H1 (cell line): ENCODE measurements at regions of chr3 and their contacts with region 1.

Region 1: DNA sequence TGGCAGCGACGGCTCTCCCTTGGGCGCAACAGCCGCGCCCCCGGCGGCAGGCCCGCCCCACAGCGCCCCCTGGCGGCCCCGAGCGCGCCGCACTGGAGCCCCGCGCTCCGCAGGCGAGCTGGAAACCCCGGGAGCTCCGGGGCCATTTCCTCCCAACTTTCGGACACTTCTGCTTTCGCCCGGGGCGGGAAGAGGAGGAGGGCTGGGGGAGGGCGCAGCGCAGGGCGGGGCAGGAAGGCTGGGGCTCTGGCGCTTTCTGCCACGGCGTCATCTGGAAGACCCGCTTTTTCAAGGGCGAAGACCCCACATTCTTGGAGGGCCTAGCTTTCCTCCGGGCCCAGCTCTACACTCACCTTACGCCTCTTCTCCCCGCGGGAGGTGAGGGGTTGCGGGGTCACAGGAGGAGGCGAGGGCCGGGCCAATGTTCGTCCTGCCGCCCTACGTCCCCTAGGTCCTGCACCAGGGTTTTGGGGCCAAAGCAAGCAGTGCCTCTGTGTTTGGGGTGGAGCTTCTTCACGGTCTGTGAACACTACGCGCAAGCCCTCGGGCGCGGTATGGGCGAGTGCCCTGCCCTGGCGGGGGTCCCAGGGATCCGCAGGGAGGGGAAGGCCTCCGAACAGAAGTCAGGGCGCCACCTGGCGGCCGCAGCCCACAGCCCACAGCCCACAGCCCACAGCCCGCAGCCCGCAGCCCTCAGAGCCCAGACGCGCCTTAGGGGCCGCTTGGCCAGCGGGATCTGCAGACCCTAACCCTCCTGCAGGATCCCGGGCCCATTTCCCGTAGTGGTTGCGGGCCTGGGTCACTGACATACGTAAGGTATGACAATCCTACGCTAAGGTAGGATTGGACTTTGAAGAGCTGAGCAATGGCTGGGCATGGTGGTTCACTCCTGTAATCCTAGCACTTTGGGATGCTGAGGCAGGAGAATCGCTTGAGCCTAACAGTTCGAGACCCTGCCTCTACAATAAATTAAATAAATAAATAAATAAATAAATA is 31.1 kb downstream of the FOXL2 start:
- DNase-seq: peak in 1 of 2 experiments; percentile 98
- H3K4me3 ChIP-seq: peak overlapping the region; percentile 44 to 89 (median 86)
- H3K27ac ChIP-seq: peak overlapping the region; percentile 65
- H3K4me1 ChIP-seq: peaks cover 0 to 4% (median under 1%) of the 10 kb centered on the region in 4 experiments; a peak in 2 of 7 replicates
- H3K27me3 ChIP-seq: no peaks in the 10 kb centered on the region
- CTCF ChIP-seq: peak; percentile 77 to 97 (median 80)
- EP300 ChIP-seq: peak in 1 of 2 experiments; percentile 50; a peak in 1 of 3 replicates
- POLR2A ChIP-seq: peak in 1 of 2 experiments; percentile 57; a peak in 1 of 3 replicates
- RAD21 ChIP-seq: peak; percentile 75 to 85

Region 2: DNA sequence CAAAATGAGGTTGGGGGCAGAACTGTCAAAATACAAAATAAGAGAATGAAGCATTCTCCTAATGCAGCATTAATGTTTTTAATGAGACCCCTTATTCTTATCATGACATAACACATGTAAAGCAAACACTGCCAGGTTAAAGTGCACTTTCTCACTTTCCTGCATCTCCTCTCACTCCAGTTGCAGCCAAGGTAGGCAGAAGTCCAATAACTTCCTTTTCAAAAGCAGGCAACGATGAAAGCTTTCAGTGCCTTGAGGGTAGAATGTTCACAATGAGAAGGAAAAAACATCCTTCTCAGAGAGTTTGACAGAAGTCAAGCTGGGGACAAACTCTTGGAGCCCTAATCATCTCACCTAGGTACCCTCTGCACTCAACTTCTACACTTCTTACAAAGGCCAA is 247.7 kb before region 1 on chr3:
- CTCF ChIA-PET with region 1: interaction called, 24 read pairs
- POLR2A ChIA-PET with region 1: no interaction called
- DNase-seq: no peak
- H3K4me3 ChIP-seq: no peak overlapping the region
- H3K27ac ChIP-seq: no peak overlapping the region
- H3K4me1 ChIP-seq: no peaks in the 10 kb centered on the region
- H3K27me3 ChIP-seq: no peaks in the 10 kb centered on the region
- CTCF ChIP-seq: no peak
- EP300 ChIP-seq: no peak
- POLR2A ChIP-seq: no peak
- RAD21 ChIP-seq: no peak

Region 3: DNA sequence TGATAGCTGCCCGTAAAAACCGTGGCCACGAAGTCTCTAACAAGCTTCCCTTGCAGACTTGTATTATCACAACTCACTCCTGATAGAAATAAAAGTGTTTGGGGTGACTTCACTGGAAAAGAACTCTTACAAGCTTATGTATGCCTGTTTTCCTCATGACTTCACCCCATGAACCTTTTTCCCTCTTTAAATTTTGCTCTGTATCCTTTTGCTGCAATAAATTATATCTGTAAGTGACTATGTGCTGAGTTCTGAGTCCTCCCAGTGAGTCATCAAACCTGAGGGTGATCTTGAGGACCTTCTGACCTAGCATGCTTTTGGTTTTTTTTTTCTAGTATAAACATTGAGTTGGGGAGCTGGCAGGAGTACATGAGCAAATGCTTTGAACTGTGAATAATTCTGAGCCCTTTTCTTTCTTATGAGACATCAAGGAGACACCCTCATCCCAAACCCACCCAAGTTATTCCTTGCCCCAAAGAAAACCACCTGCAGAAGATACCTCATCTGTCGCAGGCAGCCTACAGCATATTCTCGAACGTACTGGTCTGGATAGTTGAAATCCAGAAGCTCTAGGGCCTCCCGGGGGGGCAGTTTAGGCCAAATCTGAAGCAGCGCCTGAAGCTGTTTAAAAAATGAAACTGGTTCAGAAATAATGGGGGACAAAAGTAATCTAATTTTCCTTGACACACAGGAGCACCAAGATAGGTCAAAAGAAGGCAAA is 221.4 kb before region 1 on chr3:
- CTCF ChIA-PET with region 1: interaction called, 322 read pairs
- POLR2A ChIA-PET with region 1: interaction called, 6 read pairs
- DNase-seq: no peak
- H3K4me3 ChIP-seq: no peak overlapping the region
- H3K27ac ChIP-seq: no peak overlapping the region
- H3K4me1 ChIP-seq: no peaks in the 10 kb centered on the region
- H3K27me3 ChIP-seq: no peaks in the 10 kb centered on the region
- CTCF ChIP-seq: no peak
- EP300 ChIP-seq: no peak
- POLR2A ChIP-seq: no peak
- RAD21 ChIP-seq: no peak

Region 4: DNA sequence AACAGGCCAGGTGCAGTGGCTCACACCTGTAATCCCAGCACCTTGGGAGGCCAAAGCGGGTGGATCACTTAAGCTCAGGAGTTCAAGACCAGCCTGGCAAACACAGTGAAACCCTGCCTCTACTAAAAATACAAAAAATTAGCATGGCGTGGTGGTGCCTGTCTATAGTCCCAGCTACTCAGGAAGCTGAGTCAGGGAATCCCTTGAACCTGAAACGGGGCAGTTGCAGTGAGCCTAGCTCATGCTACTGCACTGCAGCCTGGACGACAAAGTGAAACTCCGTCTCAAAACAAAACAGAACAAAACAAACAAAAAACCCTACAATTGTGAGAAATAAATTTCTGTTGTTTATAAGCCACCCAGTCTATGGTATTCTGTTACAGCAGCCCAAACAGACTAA is 175.7 kb before region 1 on chr3:
- CTCF ChIA-PET with region 1: interaction called, 13 read pairs
- POLR2A ChIA-PET with region 1: no interaction called
- DNase-seq: no peak
- H3K4me3 ChIP-seq: no peak overlapping the region
- H3K27ac ChIP-seq: no peak overlapping the region
- H3K4me1 ChIP-seq: no peaks in the 10 kb centered on the region
- H3K27me3 ChIP-seq: no peaks in the 10 kb centered on the region
- CTCF ChIP-seq: no peak
- EP300 ChIP-seq: no peak
- POLR2A ChIP-seq: no peak
- RAD21 ChIP-seq: no peak

Region 5: DNA sequence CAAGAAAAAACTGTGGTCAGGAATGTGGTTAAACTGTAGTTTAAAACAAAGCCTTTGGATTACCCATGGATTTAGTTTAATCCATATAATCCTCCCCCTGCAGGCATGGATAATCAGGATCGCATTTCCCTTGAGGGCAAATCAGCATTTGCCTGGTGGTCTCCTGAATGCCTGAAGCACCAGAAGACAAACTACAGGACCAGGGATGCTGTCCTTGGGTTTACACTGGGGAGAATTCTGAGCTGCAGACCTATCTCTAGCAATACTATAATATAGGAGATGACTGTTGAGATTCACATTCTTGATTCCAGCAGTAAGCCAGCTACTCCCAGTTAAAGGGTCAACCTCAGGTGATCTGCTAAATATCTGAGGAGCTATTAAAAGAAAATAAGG is 91.7 kb before region 1 on chr3:
- CTCF ChIA-PET with region 1: interaction called, 11 read pairs
- POLR2A ChIA-PET with region 1: interaction called, 4 read pairs
- DNase-seq: no peak
- H3K4me3 ChIP-seq: no peak overlapping the region
- H3K27ac ChIP-seq: peak overlapping the region; percentile 67; the same call in 1 of the 2 replicates
- H3K4me1 ChIP-seq: peaks cover 3 to 11% (median 6%) of the 10 kb centered on the region in 4 experiments; a peak in 5 of 7 replicates
- H3K27me3 ChIP-seq: no peaks in the 10 kb centered on the region
- CTCF ChIP-seq: no peak
- EP300 ChIP-seq: no peak
- POLR2A ChIP-seq: no peak
- RAD21 ChIP-seq: no peak

Region 6: GRCh38 chr3:138862924-138863775 is 52.7 kb before region 1 on chr3:
- CTCF ChIA-PET with region 1: interaction called, 43 read pairs
- POLR2A ChIA-PET with region 1: interaction called, 5 read pairs
- DNase-seq: peak in 1 of 2 experiments; percentile 53
- H3K4me3 ChIP-seq: peak overlapping the region in 2 of 4 experiments; percentile 33 to 47; a peak in 4 of 8 replicates
- H3K27ac ChIP-seq: peak overlapping the region; percentile 66
- H3K4me1 ChIP-seq: peaks cover 14 to 28% (median 22%) of the 10 kb centered on the region in 4 experiments
- H3K27me3 ChIP-seq: no peaks in the 10 kb centered on the region
- CTCF ChIP-seq: peak in 1 of 3 experiments; percentile 1; a peak in 1 of 4 replicates
- EP300 ChIP-seq: no peak
- POLR2A ChIP-seq: peak in 1 of 2 experiments; percentile 66; a peak in 2 of 3 replicates
- RAD21 ChIP-seq: no peak

Region 7: GRCh38 chr3:138935848-138936740 is 20.3 kb after region 1 on chr3:
- CTCF ChIA-PET with region 1: interaction called, 180 read pairs
- POLR2A ChIA-PET with region 1: interaction called, 4 read pairs
- DNase-seq: peak in 1 of 2 experiments; percentile 99
- H3K4me3 ChIP-seq: peak overlapping the region; percentile 11 to 59 (median 39); a peak in 7 of 8 replicates
- H3K27ac ChIP-seq: no peak overlapping the region
- H3K4me1 ChIP-seq: peaks cover 9 to 28% (median 19%) of the 10 kb centered on the region in 4 experiments
- H3K27me3 ChIP-seq: peaks cover 46 to 69% (median 59%) of the 10 kb centered on the region in 4 experiments
- CTCF ChIP-seq: peak in 2 of 3 experiments; percentile 84 to 86; a peak in 3 of 4 replicates
- EP300 ChIP-seq: no peak
- POLR2A ChIP-seq: no peak; a peak in 1 of 3 replicates
- RAD21 ChIP-seq: peak; percentile 32 to 63; a peak in 3 of 4 replicates